ENCODE measurements at regions of chr11 and their contacts with region 1.

Region 1: GRCh38 chr11:62421996-62422395 is 3.2 kb downstream of the SCGB1A1 start:
- DNase-seq: no peak
- ATAC-seq: no peak
- H3K4me3 ChIP-seq: no peak overlapping the region
- H3K27ac ChIP-seq: no peak overlapping the region
- H3K4me1 ChIP-seq: peaks cover 0 to 21% (median 8%) of the 10 kb centered on the region in 4 donors
- H3K27me3 ChIP-seq: no peaks in the 10 kb centered on the region
- CTCF ChIP-seq: no peak
- POLR2A ChIP-seq: no peak

Region 2: GRCh38 chr11:62542750-62543567 is 121.0 kb after region 1 on chr11:
- intact Hi-C with region 1: loop called in 1 of 2 experiments (anchors 5 kb)
- DNase-seq: peak; percentile 76 to 82 (median 79)
- ATAC-seq: peak; percentile 59 to 62 (median 61)
- H3K4me3 ChIP-seq: peak overlapping the region; percentile 44 to 97 (median 80)
- H3K27ac ChIP-seq: peak overlapping the region; percentile 46 to 96 (median 52)
- H3K4me1 ChIP-seq: peaks cover 0 to 60% (median 32%) of the 10 kb centered on the region in 4 donors
- H3K27me3 ChIP-seq: no peaks in the 10 kb centered on the region
- CTCF ChIP-seq: peak; percentile 98 to 99 (median 98)
- POLR2A ChIP-seq: no peak

Region 3: GRCh38 chr11:62556108-62556871 is 134.3 kb after region 1 on chr11:
- intact Hi-C with region 1: loop called in 1 of 2 experiments (anchors 5 kb)
- DNase-seq: peak in 2 of 3 donors; percentile 68 to 71
- ATAC-seq: peak; percentile 26 to 40 (median 30)
- H3K4me3 ChIP-seq: no peak overlapping the region
- H3K27ac ChIP-seq: peak overlapping the region; percentile 44 to 86 (median 45)
- H3K4me1 ChIP-seq: peaks cover 0 to 55% (median 24%) of the 10 kb centered on the region in 4 donors
- H3K27me3 ChIP-seq: no peaks in the 10 kb centered on the region
- CTCF ChIP-seq: no peak
- POLR2A ChIP-seq: no peak

Measured in right lobe of liver (tissue), 6 donors.